ENCODE measurements at regions of chr2 and their contacts with region 1.

Region 1: DNA sequence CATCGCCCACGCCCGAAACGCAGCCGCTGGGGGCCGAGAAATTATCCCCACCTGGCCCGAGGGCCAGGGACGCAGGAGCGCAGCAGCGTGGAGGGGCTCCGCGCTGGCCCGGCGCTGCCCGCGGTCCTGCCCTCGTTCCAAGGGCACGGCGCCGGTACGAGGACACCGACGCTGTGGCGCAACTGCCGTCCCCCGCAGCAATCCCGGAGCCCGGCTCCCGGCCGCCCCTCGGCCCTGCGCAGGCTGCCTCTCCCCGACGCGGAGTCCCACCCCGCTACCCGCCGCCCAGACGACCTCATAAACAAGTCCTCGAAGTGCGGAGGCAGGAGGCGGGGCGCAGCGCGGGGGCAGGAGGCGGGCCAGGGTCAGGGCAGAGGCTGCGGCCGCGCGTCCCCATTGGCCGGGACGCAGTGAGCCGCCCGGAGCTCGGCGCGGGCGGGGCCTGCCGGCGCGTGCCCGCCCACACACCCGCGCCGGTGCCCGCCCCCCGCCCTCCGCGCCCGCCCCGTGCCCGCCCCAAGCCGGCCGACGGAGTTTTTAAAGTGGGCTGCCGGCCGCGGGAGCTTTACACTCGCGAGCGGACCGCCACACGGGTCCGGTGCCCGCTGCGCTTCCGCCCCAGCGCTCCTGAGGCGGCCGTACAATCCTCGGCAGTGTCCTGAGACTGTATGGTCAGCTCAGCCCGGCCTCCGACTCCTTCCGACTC is at the start of gene EPAS1:
- DNase-seq: peak; percentile 100
- H3K4me3 ChIP-seq: peak within 1 kb of the TSS; percentile 96 to 98
- H3K27ac ChIP-seq: peak within 1 kb of the TSS; percentile 71 to 96
- H3K4me1 ChIP-seq: peaks cover 7 to 25% of the 10 kb centered on the region in 2 experiments; a peak in 2 of 4 replicates
- H3K27me3 ChIP-seq: no peaks in the 10 kb centered on the region
- CTCF ChIP-seq: no peak
- EP300 ChIP-seq: no peak
- RAD21 ChIP-seq: no peak
- polyA plus RNA-seq, gene EPAS1: 69.2 and 92.2 TPM in 2 replicates

Region 2: GRCh38 chr2:45993476-45993991 is 303.5 kb before region 1 on chr2:
- CTCF ChIA-PET with region 1: interaction called, 10 read pairs
- POLR2A ChIA-PET with region 1: interaction called, 3 read pairs
- DNase-seq: peak; percentile 70
- H3K4me3 ChIP-seq: no peak overlapping the region; a peak in 1 of 4 replicates
- H3K27ac ChIP-seq: no peak overlapping the region
- H3K4me1 ChIP-seq: peaks cover 0 to 5% of the 10 kb centered on the region in 2 experiments; a peak in 1 of 4 replicates
- H3K27me3 ChIP-seq: no peaks in the 10 kb centered on the region
- CTCF ChIP-seq: peak; percentile 94
- EP300 ChIP-seq: no peak
- RAD21 ChIP-seq: peak; percentile 93

Region 3: DNA sequence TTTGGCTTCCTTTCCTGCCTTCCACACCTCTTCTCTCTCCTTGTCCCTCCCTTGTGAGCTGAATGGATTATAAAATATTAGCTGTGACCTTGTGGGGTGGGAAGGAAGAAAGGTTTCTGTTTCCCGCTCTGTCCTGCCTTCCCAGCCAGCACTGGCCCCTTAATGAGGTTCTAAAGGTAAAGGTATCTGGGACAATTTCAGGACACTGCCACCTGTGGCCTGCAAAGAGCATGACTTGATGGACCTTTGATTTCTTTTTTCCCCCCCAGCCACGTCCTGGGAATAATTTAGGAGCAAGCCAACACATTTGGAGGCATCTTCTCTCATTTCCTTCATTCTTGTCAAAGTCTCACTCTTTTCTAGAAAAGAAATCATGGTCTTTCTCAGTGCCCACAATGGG is 246.5 kb before region 1 on chr2:
- CTCF ChIA-PET with region 1: interaction called, 11 read pairs
- POLR2A ChIA-PET with region 1: no interaction called
- DNase-seq: no peak
- H3K4me3 ChIP-seq: no peak overlapping the region
- H3K27ac ChIP-seq: no peak overlapping the region
- H3K4me1 ChIP-seq: peaks cover 0 to 9% of the 10 kb centered on the region in 2 experiments; a peak in 1 of 4 replicates
- H3K27me3 ChIP-seq: no peaks in the 10 kb centered on the region
- CTCF ChIP-seq: peak; percentile 21; the same call in 1 of the 2 replicates
- EP300 ChIP-seq: no peak
- RAD21 ChIP-seq: no peak

Region 4: DNA sequence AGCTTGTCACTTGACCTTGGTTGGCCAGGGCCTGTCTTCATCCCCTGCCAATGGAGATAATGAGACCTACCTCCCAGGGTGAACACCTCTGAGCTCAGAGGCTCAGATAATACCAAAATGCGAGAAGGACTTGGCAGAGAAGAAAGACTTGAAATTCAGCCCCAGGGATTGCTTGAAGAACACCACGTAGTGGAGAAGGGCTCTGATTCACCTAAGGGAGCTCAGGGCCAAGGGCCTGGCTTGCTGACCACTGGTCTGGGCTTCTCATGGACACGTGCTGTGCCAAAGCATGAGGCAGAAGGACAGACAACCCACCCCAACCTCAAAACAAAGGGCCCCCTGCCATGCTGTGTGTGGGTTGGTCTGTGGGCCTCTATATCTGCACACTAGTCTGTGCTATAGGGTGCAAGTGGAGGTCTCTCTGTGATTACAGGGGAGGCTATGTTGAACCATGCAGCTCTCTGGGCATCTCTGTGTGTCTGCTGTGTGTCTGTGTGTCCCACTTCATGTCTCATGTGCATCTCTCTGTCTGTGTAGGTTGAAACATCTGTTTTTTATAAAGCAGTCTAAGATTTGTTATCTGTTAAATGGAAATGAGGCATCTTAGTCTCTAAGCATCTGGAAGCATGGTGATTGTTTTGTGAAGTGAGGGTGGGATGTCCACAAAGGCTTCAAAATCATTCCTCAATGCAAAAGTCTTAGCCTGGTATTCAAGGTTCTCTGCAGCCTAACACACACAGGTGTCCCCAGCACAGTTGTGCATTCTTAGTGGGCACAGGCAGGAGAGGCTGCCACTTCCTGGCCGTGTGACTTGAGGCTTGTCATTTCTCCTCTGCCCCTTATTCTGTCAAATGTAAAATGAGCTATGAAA is 60.8 kb before region 1 on chr2:
- CTCF ChIA-PET with region 1: interaction called, 12 read pairs
- POLR2A ChIA-PET with region 1: interaction called, 4 read pairs
- DNase-seq: peak; percentile 71
- H3K4me3 ChIP-seq: no peak overlapping the region
- H3K27ac ChIP-seq: peak overlapping the region in 1 of 2 experiments; percentile 93; a peak in 2 of 4 replicates
- H3K4me1 ChIP-seq: peaks cover 0 to 38% of the 10 kb centered on the region in 2 experiments; a peak in 2 of 4 replicates
- H3K27me3 ChIP-seq: no peaks in the 10 kb centered on the region
- CTCF ChIP-seq: no peak
- EP300 ChIP-seq: peak in 1 of 2 experiments; percentile 83; a peak in 1 of 4 replicates
- RAD21 ChIP-seq: peak; percentile 36

Region 5: DNA sequence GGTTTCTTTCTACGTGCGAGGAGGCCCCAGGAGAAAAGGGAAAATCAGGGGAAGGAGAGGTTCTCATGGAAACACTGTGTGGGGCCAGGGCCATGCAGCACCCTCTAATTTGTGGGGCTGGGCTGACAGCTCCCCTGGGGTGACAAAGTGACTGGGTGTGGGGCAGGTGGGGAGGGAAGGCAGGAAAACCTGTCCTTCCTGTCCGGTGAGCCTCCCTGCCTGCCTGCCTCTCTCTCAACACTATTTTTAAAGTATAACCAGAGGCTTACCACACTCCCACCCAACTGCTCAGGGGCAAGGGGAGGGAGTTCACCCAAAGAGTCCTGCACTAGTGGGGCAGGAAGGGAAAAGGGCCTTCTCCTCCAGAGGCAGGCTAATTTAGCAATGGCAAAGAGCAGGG is 10.3 kb before region 1 on chr2:
- CTCF ChIA-PET with region 1: interaction called, 40 read pairs
- POLR2A ChIA-PET with region 1: interaction called, 4 read pairs
- DNase-seq: no peak
- H3K4me3 ChIP-seq: no peak overlapping the region
- H3K27ac ChIP-seq: no peak overlapping the region
- H3K4me1 ChIP-seq: peaks cover 0 to 11% of the 10 kb centered on the region in 2 experiments; a peak in 1 of 4 replicates
- H3K27me3 ChIP-seq: no peaks in the 10 kb centered on the region
- CTCF ChIP-seq: no peak
- EP300 ChIP-seq: no peak
- RAD21 ChIP-seq: no peak

Region 6: GRCh38 chr2:46329803-46330775 is 33.1 kb after region 1 on chr2:
- CTCF ChIA-PET with region 1: interaction called, 25 read pairs
- POLR2A ChIA-PET with region 1: interaction called, 97 read pairs
- DNase-seq: no peak
- H3K4me3 ChIP-seq: no peak overlapping the region
- H3K27ac ChIP-seq: peak overlapping the region; percentile 100
- H3K4me1 ChIP-seq: peaks cover 61 to 94% of the 10 kb centered on the region in 2 experiments
- H3K27me3 ChIP-seq: no peaks in the 10 kb centered on the region
- CTCF ChIP-seq: no peak
- EP300 ChIP-seq: peak in 1 of 2 experiments; percentile 79; a peak in 2 of 4 replicates
- RAD21 ChIP-seq: no peak

Region 7: GRCh38 chr2:46461011-46461674 is 164.2 kb after region 1 on chr2:
- CTCF ChIA-PET with region 1: interaction called, 15 read pairs
- POLR2A ChIA-PET with region 1: interaction called, 5 read pairs
- DNase-seq: peak; percentile 79
- H3K4me3 ChIP-seq: no peak overlapping the region; a peak in 1 of 4 replicates
- H3K27ac ChIP-seq: peak overlapping the region in 1 of 2 experiments; percentile 72; a peak in 1 of 4 replicates
- H3K4me1 ChIP-seq: peaks cover 0 to 21% of the 10 kb centered on the region in 2 experiments; a peak in 1 of 4 replicates
- H3K27me3 ChIP-seq: no peaks in the 10 kb centered on the region
- CTCF ChIP-seq: peak; percentile 100
- EP300 ChIP-seq: no peak
- RAD21 ChIP-seq: peak; percentile 100